Activated T-helper 1 cell treated with anti-CD3 and anti-CD28 coated beads, Interleukin-12 subunit alpha, Interleukin-12 subunit beta, Interleukin-2, Interleukin-4 antibody, amounts not matched to agents 30 ng/mL and 10 ng/mL and 1 ng/mL, durations not matched to agents 14 hours and 24 hours and 36 hours (primary cell): ENCODE measurements at regions of chr6 and their contacts with region 1.

Region 1: DNA sequence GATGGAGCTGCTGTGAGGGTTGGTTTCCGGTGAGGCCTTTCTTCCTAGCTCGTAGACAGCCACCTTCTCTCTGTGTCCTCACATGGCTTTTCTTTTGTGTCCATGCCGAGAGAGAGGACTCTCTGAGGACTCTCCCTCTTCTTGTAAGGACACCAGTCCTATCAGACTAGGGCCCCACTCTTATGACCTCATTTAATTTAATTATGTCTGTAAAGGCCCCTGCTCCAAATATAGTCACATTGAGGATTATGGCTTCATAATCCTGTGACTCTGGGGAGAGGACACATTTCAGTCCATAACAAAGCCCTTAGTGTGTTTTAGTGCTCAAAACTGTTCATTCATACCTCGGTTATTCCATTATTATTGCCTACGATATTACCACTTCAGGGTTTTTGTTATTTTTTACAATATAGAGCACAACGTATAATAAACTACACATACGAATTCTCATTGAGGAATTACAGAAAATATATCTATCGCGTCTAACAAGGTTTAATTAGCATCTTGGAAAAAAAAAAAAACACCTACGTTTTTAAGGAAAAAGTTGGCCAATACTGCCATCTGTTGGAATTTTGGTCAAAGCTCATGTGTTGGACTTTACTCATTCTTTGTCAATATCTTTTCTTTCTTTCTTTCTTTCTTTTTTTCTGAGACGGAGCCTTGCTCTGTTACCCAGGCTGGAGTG is 20.0 kb upstream of the TFAP2A start:
- DNase-seq: no peak
- H3K4me3 Mint-ChIP-seq: no peak overlapping the region
- H3K27ac Mint-ChIP-seq: no peak overlapping the region
- H3K4me1 Mint-ChIP-seq: peaks cover 16% of the 10 kb centered on the region
- H3K27me3 Mint-ChIP-seq: peaks cover 8% of the 10 kb centered on the region

Region 2: DNA sequence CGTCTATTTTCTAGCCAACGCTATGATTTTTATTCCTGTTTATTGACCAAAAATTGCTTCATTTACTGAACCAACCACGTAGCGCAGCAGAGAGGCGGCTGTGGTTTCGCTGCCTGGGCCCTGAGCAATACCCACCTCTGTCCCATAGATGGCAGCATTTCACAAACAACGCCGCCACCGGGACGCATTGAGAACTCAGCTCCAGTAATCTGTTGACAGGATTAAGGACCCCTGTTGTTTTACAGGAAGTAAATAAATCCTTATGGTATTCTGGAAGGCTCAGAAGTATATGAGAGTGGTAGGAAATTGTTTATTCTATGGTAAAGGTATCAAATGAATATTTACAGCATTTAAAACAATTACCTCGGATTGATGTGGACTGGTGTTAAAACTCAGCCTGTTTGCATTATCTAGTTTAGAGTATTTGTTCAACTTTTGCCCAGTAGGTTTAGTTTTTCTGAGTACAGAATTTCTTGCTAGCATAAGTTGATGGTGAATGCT is 1451.6 kb before region 1 on chr6:
- intact Hi-C with region 1: loop called (anchors 1 kb)
- DNase-seq: peak; percentile 32
- H3K4me3 Mint-ChIP-seq: no peak overlapping the region
- H3K27ac Mint-ChIP-seq: no peak overlapping the region
- H3K4me1 Mint-ChIP-seq: no peaks in the 10 kb centered on the region
- H3K27me3 Mint-ChIP-seq: peaks cover 3% of the 10 kb centered on the region

Region 3: DNA sequence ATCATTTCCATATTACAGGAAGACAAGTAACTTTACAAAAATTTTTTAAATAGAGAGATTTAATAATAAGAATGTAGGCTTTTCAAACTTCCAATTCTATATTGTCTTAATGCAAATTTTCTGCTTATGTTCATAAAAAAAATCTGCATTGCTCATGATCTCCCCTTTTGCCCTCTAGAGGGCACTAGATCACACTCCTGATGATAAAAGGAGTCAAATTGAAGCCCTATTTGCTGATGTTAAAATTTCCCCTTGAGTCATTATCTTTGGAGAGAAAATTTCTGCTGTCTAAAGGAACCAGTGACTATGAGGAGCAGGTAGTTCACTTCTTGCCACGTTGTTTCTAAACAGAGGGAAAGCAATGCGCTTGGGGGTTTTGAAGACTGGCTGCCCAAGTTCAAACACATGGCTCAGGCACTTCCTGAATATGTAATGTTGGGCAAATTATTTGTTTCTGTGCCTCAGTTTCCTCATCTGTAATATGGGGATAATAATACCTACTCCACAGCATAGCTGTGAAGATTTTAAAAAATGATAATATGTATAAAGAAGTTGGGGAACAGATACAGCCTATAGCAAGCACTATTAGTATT is 894.2 kb before region 1 on chr6:
- intact Hi-C with region 1: loop called (anchors 1 kb)
- DNase-seq: no peak
- H3K4me3 Mint-ChIP-seq: no peak overlapping the region
- H3K27ac Mint-ChIP-seq: no peak overlapping the region
- H3K4me1 Mint-ChIP-seq: no peaks in the 10 kb centered on the region
- H3K27me3 Mint-ChIP-seq: no peaks in the 10 kb centered on the region

Region 4: DNA sequence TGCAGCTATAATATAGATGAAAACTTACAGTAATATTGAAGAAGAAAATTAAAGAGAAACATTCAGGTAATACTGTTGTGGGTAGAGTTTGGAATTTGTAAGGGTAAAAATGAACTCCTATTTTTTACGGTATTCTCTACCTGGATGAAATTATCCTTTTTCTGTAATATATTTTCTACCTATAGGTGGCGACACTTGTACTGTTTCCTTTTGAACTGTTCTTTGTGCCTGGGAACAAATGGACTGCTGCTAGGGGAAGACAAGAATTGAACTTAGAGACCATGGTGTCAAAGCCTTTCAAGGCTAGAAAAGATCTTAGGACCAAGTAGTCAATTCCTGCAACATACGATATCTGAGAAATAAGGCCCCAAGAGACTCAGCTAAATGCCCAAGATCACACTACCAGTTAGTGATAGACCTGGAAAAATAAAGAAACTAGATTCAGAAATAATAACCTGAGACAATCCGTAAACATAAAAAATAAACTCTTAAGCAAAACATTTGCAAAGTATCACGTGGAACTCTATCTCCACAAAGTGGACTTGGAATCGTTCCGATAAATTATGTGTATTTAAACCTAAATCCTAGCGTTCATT is 403.8 kb before region 1 on chr6:
- intact Hi-C with region 1: loop called (anchors 1 kb)
- DNase-seq: no peak
- H3K4me3 Mint-ChIP-seq: no peak overlapping the region
- H3K27ac Mint-ChIP-seq: no peak overlapping the region
- H3K4me1 Mint-ChIP-seq: no peaks in the 10 kb centered on the region
- H3K27me3 Mint-ChIP-seq: peaks cover 5% of the 10 kb centered on the region

Region 5: DNA sequence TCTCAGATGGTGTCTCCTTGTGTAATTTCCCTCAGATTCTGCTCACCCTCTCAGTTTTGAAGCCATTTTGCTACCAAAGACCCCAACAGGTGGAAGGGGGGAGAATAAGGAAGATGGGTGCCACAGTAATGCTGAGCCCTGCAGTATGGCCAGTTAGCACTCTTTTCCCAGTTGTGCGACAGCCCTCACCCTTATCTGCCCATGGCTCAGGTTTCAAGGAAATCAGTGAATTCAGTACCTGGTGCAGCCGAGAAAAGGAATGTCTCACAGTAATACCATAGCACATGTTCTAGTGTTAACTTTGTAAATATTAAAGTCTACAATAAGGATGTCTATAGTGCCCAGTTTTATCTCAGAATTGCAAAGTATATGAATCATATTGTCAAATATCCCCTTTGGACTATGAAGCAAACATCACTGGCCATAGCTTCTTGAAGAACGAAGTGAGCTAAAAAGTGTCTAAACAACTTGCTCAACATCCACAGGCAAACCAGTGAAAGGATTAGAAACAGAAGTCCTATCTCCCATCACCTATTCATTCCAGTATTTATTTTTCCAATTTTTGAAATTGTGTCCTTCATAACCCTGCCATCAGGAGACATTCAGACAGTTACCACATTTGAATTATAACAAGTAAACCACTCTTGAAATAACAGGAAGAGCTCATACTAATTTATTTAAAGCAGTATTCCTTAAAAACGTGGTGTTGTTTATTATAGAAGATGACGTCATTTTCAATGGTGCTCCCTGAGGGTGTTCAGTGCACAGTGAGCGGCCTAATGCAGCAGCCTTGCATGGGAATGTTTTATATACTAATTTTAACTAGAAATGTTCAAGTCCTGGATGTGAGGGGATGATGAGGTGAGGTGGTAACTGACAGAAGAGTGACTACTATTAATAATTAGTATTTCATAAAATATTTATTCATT is 386.2 kb before region 1 on chr6:
- intact Hi-C with region 1: no loop called
- DNase-seq: no peak
- H3K4me3 Mint-ChIP-seq: no peak overlapping the region
- H3K27ac Mint-ChIP-seq: no peak overlapping the region
- H3K4me1 Mint-ChIP-seq: no peaks in the 10 kb centered on the region
- H3K27me3 Mint-ChIP-seq: no peaks in the 10 kb centered on the region

Region 6: GRCh38 chr6:10381133-10381829 is 53.6 kb before region 1 on chr6:
- intact Hi-C with region 1: no loop called
- DNase-seq: no peak
- H3K4me3 Mint-ChIP-seq: no peak overlapping the region
- H3K27ac Mint-ChIP-seq: no peak overlapping the region
- H3K4me1 Mint-ChIP-seq: peaks cover 7% of the 10 kb centered on the region
- H3K27me3 Mint-ChIP-seq: peaks cover 46% of the 10 kb centered on the region

Region 7: DNA sequence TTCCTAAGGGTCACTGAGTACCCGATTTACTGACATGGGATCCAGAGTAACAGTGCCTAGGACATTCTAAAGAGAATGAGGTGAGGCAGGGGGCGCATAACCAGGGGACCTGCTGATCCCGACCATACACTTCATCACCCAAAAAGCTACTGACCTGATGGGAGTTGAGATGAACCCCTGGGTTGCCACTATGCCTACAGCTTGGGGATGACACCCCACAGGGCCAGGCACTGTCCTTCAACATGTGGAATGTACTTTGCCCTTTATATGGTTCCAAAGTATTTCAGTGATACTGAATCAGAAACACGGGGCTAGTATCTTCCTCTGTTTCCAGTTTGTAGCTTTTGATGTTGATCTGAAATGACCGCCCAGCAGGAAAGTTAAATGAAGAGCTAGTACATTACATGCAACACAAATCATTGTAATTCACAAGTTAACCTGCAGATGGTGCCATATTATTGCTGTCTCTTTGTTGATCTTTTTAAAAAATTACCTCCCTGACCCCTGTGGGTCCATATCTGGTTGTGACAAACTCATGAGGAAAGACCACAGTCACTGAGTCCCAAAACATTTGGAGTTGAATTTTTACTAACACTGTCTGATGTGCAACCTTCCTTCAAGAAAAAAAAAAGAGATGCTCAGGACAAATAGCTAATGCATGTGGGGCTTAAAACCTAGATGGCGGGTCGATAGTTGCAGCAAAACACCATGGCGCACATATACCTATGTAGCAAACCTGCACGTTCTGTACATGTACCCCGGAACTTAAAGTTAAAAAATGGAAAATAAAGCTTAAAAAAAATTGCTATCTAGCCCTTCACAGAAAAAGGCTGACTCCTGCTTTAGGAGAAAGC is 43.6 kb after region 1 on chr6:
- intact Hi-C with region 1: no loop called
- DNase-seq: no peak
- H3K4me3 Mint-ChIP-seq: no peak overlapping the region
- H3K27ac Mint-ChIP-seq: no peak overlapping the region
- H3K4me1 Mint-ChIP-seq: no peaks in the 10 kb centered on the region
- H3K27me3 Mint-ChIP-seq: peaks cover 13% of the 10 kb centered on the region